ENCODE measurements at regions of chr17 and their contacts with region 1.

Region 1: GRCh38 chr17:69388822-69389442 is 25.6 kb upstream of the MAP2K6 start:
- H3K4me3 ChIP-seq: no peak overlapping the region
- H3K27ac ChIP-seq: no peak overlapping the region
- H3K4me1 ChIP-seq: no peaks in the 10 kb centered on the region
- CTCF ChIP-seq: no peak

Region 2: GRCh38 chr17:69192754-69193153 is 196.2 kb before region 1 on chr17:
- CTCF ChIA-PET with region 1: no interaction called
- POLR2A ChIA-PET with region 1: no interaction called
- H3K4me3 ChIP-seq: no peak overlapping the region
- H3K27ac ChIP-seq: no peak overlapping the region
- H3K4me1 ChIP-seq: peaks cover 3% of the 10 kb centered on the region; the same call in 1 of the 2 replicates
- CTCF ChIP-seq: no peak

Region 3: DNA sequence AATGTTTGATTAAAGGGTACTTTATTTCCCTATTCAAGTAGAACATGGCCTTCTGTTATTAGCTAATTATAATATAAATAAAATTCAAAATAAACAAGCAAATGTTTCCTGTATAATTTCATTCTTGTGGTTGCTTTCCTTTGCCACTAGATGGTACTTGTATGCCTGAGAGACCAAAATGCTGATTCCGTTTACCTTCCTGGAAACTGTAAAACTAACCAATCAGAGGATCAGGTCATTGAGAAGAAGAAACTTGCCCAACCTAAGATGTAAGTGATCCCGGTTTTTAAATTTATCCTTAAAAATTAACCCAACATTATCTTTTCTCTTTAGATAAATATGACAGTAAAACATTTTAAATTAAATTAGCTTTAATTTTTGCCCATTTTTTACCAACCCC is 53.9 kb before region 1 on chr17:
- CTCF ChIA-PET with region 1: interaction called, 31 read pairs
- POLR2A ChIA-PET with region 1: no interaction called
- H3K4me3 ChIP-seq: no peak overlapping the region
- H3K27ac ChIP-seq: no peak overlapping the region
- H3K4me1 ChIP-seq: no peaks in the 10 kb centered on the region
- CTCF ChIP-seq: no peak

Region 4: GRCh38 chr17:69404382-69404781 is 15.4 kb after region 1 on chr17:
- CTCF ChIA-PET with region 1: interaction called, 30 read pairs
- POLR2A ChIA-PET with region 1: no interaction called
- H3K4me3 ChIP-seq: no peak overlapping the region
- H3K27ac ChIP-seq: no peak overlapping the region
- H3K4me1 ChIP-seq: no peaks in the 10 kb centered on the region
- CTCF ChIP-seq: no peak

Region 5: DNA sequence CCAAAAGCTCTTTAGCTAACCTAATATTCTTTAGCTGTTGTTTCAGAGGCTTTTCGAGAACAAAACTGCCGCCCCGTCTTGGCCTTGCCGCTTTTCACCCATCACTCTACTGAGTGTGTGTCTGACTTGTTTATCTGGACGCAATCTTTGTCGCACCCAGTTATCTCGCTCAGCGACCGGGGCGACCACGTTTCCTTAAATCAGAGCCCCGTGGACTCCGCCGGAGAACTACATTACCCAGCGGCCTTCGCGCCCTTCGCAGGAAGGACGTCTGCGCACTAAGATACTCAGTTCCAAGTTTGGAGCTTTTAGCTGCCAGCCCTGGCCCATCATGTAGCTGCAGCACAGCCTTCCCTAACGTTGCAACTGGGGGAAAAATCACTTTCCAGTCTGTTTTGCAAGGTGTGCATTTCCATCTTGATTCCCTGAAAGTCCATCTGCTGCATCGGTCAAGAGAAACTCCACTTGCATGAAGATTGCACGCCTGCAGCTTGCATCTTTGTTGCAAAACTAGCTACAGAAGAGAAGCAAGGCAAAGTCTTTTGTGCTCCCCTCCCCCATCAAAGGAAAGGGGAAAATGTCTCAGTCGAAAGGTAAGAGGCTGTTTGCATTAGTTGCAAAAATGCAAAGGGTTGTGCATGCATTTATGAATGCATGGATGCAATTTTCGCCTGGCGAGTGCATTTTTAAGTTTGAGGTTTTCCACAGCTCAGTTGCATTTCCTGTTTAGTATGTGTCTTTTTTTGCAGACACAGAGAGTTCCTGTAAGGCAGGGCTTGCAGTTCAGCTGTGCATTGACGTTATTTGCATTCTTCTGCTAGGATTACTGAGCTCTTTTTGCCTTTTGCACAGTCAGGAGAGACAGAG is 25.7 kb after region 1 on chr17 and contains the start of gene MAP2K6:
- CTCF ChIA-PET with region 1: interaction called, 30 read pairs
- POLR2A ChIA-PET with region 1: no interaction called
- H3K4me3 ChIP-seq: peak within 1 kb of the TSS; percentile 30
- H3K27ac ChIP-seq: peak within 1 kb of the TSS; percentile 29; the same call in 1 of the 2 replicates
- H3K4me1 ChIP-seq: peaks cover 28% of the 10 kb centered on the region
- CTCF ChIP-seq: no peak

Region 6: GRCh38 chr17:69434164-69434579 is 45.2 kb after region 1 on chr17:
- CTCF ChIA-PET with region 1: no interaction called
- POLR2A ChIA-PET with region 1: no interaction called
- H3K4me3 ChIP-seq: no peak overlapping the region
- H3K27ac ChIP-seq: no peak overlapping the region
- H3K4me1 ChIP-seq: peaks cover 12% of the 10 kb centered on the region
- CTCF ChIP-seq: no peak